PC-9 (cell line): ENCODE measurements at regions of chr6 and their contacts with region 1.

Region 1: DNA sequence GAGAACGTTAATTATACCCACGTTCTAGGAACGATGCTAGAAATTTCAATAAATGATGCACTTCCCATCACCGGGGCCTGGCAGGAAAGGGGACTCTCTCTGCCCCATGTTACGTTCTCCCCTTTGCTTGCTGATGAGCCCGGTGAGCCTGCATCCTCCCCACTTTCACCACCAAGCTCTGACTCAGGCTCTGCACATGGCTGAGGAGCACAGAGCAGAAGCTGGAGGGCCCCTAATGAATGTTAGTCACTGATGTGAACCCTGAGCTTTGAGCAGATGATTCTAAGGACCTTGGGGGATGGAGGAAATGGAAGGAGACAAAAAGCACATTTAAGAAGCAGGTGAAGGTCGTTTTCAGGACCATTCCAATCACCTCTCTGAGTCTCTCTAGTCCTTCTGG is 468.2 kb upstream of the ARID1B start:
- DNase-seq: no peak
- H3K4me3 ChIP-seq: no peak overlapping the region
- H3K27ac ChIP-seq: no peak overlapping the region
- H3K4me1 ChIP-seq: no peaks in the 10 kb centered on the region
- H3K27me3 ChIP-seq: no peaks in the 10 kb centered on the region
- CTCF ChIP-seq: no peak

Region 2: GRCh38 chr6:155510879-155511278 is 798.1 kb before region 1 on chr6:
- CTCF ChIA-PET with region 1: no interaction called
- POLR2A ChIA-PET with region 1: interaction called, 27 read pairs
- intact Hi-C with region 1: no loop called
- DNase-seq: no peak
- H3K4me3 ChIP-seq: no peak overlapping the region
- H3K27ac ChIP-seq: no peak overlapping the region
- H3K4me1 ChIP-seq: no peaks in the 10 kb centered on the region
- H3K27me3 ChIP-seq: no peaks in the 10 kb centered on the region
- CTCF ChIP-seq: no peak